ENCODE measurements at regions of chr3 and their contacts with region 1.

Region 1: GRCh38 chr3:81643721-81644120 is 117.7 kb downstream of the GBE1 start:
- DNase-seq: peak; percentile 6
- H3K4me3 Mint-ChIP-seq: no peak overlapping the region
- H3K27ac Mint-ChIP-seq: no peak overlapping the region
- H3K4me1 Mint-ChIP-seq: no peaks in the 10 kb centered on the region
- H3K27me3 Mint-ChIP-seq: no peaks in the 10 kb centered on the region
- CTCF ChIP-seq: no peak

Region 2: DNA sequence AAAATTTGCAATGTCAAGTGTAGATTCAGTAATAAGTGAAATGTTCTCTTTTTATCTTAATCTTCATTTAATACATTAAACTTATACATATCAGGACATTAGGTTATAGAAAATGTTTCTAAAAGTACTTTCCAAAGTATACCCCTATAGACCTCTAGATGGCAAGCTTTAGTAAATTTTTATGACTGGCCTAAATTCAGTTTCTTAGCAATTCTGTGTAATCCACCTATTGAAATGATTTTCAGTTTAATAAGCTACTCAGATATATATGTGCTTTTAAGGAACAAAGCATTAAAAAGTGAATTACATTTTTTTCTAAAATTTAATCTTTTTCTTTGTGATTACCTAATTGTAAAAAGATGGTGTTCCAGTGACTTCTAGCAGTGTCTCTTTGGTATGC is 224.5 kb before region 1 on chr3:
- CTCF ChIA-PET with region 1: no interaction called
- intact Hi-C with region 1: loop called (anchors 2 kb)
- DNase-seq: no peak
- H3K4me3 Mint-ChIP-seq: no peak overlapping the region
- H3K27ac Mint-ChIP-seq: no peak overlapping the region
- H3K4me1 Mint-ChIP-seq: no peaks in the 10 kb centered on the region
- H3K27me3 Mint-ChIP-seq: no peaks in the 10 kb centered on the region
- CTCF ChIP-seq: no peak

Region 3: DNA sequence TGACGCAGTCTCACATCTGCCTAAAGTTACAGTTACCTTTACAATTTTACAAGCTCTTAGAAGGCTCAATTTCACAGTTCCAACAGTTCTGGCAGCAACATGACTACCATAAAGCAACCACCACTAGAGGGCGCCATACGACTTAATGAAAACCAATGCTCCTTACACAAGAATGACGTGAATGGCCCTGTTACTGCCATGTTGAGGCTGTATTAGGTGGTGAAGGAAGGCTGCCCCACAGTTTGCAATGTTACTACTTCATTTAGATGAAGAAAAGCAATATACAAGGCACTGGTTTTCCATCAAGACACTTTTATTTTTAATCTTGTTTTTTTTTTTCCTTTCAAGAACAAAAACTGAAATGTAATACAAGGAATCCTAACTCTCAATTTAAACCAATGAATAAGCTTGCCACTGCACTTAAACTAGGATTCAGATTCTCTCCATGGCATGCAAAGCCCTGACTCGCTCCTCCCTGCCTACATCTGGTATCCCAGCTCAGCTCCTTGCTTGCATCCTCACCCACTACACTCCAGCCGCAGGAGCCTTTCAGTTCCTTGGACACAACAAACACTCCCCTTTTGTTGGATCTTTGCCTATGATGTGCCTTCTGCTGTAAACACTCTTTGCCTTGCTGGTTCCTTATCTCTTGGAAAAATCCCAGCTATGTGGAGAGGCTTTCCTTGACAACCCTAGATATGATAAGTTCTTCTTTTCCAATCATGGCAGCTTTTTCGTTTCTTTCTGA is 153.0 kb before region 1 on chr3:
- CTCF ChIA-PET with region 1: no interaction called
- intact Hi-C with region 1: loop called (anchors 2 kb)
- DNase-seq: peak; percentile 79
- H3K4me3 Mint-ChIP-seq: no peak overlapping the region
- H3K27ac Mint-ChIP-seq: no peak overlapping the region
- H3K4me1 Mint-ChIP-seq: no peaks in the 10 kb centered on the region
- H3K27me3 Mint-ChIP-seq: no peaks in the 10 kb centered on the region
- CTCF ChIP-seq: peak; percentile 49

Region 4: GRCh38 chr3:81581966-81582599 is 61.6 kb before region 1 on chr3:
- CTCF ChIA-PET with region 1: interaction called, 3 read pairs
- intact Hi-C with region 1: loop called (anchors 2 kb)
- DNase-seq: peak; percentile 38
- H3K4me3 Mint-ChIP-seq: no peak overlapping the region
- H3K27ac Mint-ChIP-seq: no peak overlapping the region
- H3K4me1 Mint-ChIP-seq: no peaks in the 10 kb centered on the region
- H3K27me3 Mint-ChIP-seq: no peaks in the 10 kb centered on the region
- CTCF ChIP-seq: no peak

Measured in Calu3 (cell line).